ENCODE measurements at regions of chr22 and their contacts with region 1.

Region 1: GRCh38 chr22:38973289-38974169 is 8.6 kb upstream of the APOBEC3B start:
- DNase-seq: no peak
- H3K4me3 ChIP-seq: no peak overlapping the region
- H3K27ac ChIP-seq: no peak overlapping the region
- H3K4me1 ChIP-seq: no peaks in the 10 kb centered on the region
- H3K27me3 ChIP-seq: no peaks in the 10 kb centered on the region
- CTCF ChIP-seq: peak; percentile 89 to 98

Region 2: DNA sequence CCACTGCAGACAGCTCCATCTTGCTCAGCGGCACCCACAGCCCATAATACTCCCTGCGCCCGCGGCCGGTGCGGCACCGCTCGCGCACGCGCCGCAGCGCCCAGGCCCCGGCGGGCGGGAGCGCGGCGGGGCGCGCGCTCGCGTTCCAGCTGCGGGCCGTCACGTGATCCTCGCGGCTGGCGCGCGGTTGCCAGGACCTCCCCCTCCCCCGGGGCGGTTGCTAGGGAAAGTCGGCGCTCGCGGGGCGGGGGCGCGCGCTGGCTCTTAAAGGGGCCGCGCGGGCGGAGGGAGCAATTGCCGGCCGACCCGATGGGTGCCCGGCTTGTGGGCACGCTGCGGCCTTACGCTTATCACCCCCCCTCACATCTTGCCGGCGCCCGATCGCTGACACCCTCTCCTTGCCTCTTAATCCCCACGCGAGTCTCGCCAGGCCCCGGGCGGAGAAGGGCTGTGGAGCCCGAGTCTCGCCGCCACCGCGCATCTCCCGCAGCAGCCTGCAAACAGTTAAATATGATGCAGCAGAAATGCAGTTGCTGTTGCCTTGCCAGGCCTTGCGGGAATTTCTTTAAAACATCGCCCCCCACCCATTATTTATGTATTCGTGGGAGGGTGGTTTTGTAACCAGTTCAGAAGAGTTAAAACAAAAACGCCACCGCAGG is 101.2 kb before region 1 on chr22 and contains the start of gene CBX6:
- CTCF ChIA-PET with region 1: no interaction called
- dilution Hi-C with region 1: no loop called
- in situ Hi-C with region 1: no loop called
- intact Hi-C with region 1: loop called (anchors 1 kb)
- DNase-seq: peak; percentile 81
- H3K4me3 ChIP-seq: peak within 1 kb of the TSS; percentile 68 to 83 (median 76)
- H3K27ac ChIP-seq: peak within 1 kb of the TSS; percentile 36
- H3K4me1 ChIP-seq: peaks cover 27% of the 10 kb centered on the region
- H3K27me3 ChIP-seq: no peaks in the 10 kb centered on the region
- CTCF ChIP-seq: no peak
- total RNA-seq, gene CBX6: 32.3 to 55.7 TPM

Region 3: DNA sequence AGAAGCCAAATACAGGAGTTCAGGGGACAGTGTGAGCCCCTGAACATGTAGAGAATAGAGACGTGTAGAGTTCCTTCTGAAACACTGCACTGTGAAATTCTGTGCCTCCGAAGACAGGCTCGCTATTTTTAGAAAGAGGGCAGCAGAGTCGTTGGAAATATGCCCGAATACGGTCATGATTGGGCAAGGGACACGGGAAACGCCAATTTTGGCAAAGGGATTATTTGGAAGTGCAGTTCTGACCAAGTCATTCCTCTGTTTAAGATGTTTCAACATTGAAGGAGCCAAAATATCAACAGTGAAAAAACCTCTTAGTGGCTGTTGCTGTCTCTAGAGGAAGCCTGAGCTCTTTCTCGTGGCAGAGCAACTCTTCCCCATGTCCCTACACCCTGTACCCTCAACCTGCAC is 92.1 kb before region 1 on chr22:
- CTCF ChIA-PET with region 1: no interaction called
- dilution Hi-C with region 1: loop called (anchors 5 kb)
- in situ Hi-C with region 1: no loop called
- intact Hi-C with region 1: no loop called
- DNase-seq: no peak
- H3K4me3 ChIP-seq: no peak overlapping the region
- H3K27ac ChIP-seq: no peak overlapping the region
- H3K4me1 ChIP-seq: peaks cover 4% of the 10 kb centered on the region
- H3K27me3 ChIP-seq: peaks cover 2% of the 10 kb centered on the region
- CTCF ChIP-seq: peak in 1 of 2 donors; percentile 19

Region 4: DNA sequence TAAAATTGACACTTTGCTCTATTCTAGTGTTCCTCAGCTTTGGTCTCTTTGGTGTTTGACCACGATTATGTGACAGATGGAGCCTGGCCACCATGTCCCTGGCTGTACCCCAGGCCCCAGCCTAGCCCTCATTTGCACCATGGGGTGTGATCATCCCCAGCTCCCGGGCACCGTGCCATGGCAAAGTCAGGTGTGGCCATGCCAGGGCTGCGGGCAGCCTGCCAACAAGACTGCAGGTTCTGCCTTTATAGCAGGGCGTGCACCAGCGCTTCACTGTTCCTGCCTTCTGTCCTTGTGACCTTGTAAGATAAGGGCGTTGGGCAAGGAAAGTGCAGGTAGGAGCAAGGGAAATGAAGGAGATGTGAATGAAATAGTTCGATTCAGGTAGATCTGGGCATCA is 38.5 kb before region 1 on chr22:
- CTCF ChIA-PET with region 1: no interaction called
- dilution Hi-C with region 1: loop called (anchors 5 kb)
- in situ Hi-C with region 1: no loop called
- intact Hi-C with region 1: no loop called
- DNase-seq: peak; percentile 54
- H3K4me3 ChIP-seq: no peak overlapping the region
- H3K27ac ChIP-seq: no peak overlapping the region
- H3K4me1 ChIP-seq: peaks cover 6% of the 10 kb centered on the region
- H3K27me3 ChIP-seq: no peaks in the 10 kb centered on the region
- CTCF ChIP-seq: no peak

Region 5: DNA sequence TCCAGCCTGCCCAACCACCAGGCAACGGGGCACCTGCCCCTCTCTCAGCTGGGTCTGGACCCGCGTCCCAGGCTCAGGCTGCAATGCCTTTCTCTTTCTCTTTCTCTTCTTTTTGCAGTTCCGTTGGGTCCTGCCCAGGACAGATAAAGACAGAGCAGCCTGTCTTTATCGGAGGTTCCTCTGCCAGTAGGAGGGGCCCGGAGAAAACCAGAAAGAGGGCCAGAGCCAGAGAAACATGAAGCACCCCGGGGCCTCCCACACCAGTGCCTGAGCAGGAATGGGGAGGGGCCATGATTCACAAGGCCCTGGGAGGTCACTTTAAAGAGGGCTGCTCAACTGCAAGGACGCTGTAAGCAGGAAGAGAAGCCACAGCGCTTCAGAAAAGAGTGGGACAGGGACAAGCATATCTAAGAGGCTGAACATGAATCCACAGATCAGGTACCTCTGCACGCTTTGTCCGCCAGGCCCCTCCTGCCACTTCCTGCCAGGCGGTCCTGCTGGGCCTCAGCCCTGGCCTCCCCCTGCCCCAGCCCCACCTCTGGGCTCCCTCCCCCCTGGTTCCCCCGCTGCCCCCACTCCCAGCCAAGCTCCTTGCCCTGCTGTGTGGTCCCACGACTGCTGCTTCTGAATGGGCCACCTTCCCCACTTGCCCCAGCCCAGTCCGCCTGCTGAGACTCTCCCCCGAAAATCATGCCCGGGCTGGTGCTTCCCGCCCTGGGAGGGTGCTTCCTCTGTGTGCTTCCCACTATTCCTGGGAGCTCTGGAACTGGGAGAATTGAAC is 40.6 kb after region 1 on chr22 and contains the start of gene APOBEC3C:
- CTCF ChIA-PET with region 1: no interaction called
- dilution Hi-C with region 1: loop called (anchors 5 kb)
- in situ Hi-C with region 1: no loop called
- intact Hi-C with region 1: no loop called
- DNase-seq: peak; percentile 86
- H3K4me3 ChIP-seq: peak within 1 kb of the TSS; percentile 62 to 73 (median 62)
- H3K27ac ChIP-seq: peak within 1 kb of the TSS; percentile 38
- H3K4me1 ChIP-seq: peaks cover 17% of the 10 kb centered on the region
- H3K27me3 ChIP-seq: no peaks in the 10 kb centered on the region
- CTCF ChIP-seq: peak in 1 of 2 donors; percentile 22
- total RNA-seq, gene APOBEC3C: 30.5 to 151 TPM

Region 6: DNA sequence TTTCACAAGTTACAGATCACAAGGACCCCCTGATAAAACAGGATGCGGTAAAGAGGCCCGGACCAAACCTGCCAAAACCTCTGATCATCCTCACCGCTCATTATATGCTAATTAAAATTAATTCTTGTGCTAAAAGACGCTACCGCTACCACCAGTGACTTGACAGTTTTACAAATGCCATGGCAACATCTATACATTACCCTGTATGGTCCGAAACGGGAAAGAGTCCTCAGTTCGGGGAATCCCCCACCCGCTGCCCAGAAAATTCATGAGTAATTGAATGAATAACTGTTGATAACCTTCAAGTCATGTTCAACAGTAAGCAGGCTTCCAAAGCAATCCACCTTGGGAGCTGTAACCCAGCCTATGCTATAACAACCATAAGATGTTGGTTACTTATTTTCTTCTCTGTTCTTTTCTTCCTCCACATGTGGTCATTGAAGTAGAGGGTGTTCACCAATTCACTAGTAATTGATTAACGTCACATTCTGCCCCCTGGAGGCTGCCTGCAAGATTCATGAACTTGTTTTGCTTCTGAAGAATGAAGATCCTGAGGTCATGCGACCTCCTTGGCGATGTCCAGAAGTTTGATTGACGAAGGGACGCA is 144.2 kb after region 1 on chr22:
- CTCF ChIA-PET with region 1: no interaction called
- dilution Hi-C with region 1: no loop called
- in situ Hi-C with region 1: no loop called
- intact Hi-C with region 1: loop called (anchors 1 kb)
- DNase-seq: peak; percentile 42
- H3K4me3 ChIP-seq: no peak overlapping the region
- H3K27ac ChIP-seq: no peak overlapping the region
- H3K4me1 ChIP-seq: peaks cover 10% of the 10 kb centered on the region
- H3K27me3 ChIP-seq: no peaks in the 10 kb centered on the region
- CTCF ChIP-seq: peak; percentile 52 to 67

Region 7: DNA sequence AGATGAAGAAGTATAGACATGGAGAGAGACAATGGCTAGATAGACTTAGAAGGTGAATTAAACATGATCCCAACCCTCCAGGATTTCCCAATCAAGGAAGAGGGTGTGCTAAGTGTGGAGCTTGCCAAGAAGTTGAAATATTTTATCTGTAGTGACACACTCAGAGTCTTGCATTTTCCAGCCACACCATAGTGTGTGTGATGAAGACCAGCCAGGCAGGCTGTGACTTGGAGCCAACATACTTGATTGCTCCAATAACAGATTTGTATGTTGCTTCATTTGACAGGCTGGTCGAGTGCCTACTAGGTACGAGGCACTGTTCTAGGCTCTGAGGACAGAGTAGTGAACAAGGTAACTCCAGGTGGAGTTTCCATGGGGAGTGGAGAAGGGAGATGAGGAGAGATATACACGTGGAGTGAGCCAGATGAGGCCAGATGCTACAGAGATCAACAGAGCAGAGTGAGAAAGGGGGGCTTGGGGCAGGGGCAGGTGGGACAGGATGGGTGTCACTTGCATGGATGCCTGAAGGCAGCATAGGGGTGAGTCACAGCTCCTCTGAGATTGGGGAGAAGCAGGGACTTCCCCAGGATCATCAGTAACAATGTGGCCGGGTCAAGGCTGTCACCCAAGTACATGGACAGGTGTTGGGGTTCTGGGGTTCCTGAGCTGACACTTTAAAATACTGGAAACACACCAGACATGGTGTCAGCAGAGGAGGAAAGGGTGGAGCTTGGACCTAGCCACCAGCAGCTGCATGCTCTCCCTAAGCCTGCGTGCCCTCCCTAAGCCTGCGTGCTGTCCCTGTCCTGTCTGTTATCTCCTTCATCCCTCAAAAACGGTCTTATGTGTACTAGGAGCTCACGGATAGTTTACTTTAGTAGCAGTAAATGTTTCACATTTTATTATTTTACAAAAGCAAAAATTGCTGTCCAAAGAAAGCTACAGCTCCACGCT is 247.6 kb after region 1 on chr22:
- CTCF ChIA-PET with region 1: interaction called, 26 read pairs
- dilution Hi-C with region 1: no loop called
- in situ Hi-C with region 1: no loop called
- intact Hi-C with region 1: no loop called
- DNase-seq: peak; percentile 66
- H3K4me3 ChIP-seq: no peak overlapping the region
- H3K27ac ChIP-seq: no peak overlapping the region
- H3K4me1 ChIP-seq: peaks cover 10% of the 10 kb centered on the region
- H3K27me3 ChIP-seq: no peaks in the 10 kb centered on the region
- CTCF ChIP-seq: no peak

Measured in mammary epithelial cell (primary cell).